AG04450 (cell line): ENCODE measurements at regions of chr2 and their contacts with region 1.

Region 1: DNA sequence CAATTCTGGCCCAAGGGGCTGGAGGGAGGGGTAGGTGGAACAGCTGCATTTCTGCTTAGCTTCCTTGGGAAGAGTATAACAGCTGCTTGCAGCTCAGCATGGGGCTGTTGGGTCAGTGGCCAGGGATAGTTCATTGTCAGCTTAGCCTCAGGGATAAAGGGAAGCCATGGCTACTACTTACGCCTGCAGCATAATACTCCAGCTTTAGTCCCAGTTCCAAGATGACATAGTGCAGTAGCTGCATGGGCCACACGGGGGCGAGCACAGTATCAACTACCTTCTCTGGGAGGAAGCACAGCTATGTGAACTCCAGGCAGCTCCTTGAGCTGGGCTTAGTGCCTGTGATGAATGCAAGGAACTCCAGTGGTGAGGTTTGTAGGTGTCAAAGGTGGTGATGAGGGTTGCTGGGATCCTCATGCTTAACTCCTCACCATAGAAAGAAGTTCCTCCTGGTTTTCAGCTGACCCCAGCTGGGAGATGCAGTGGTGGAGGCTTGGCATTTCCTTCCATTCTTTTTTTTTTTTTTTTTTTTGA is 35.4 kb upstream of the RHOB start:
- DNase-seq: peak; percentile 38
- H3K4me3 ChIP-seq: no peak overlapping the region
- H3K27ac ChIP-seq: no peak overlapping the region
- H3K27me3 ChIP-seq: no peaks in the 10 kb centered on the region
- CTCF ChIP-seq: peak; percentile 88

Region 2: GRCh38 chr2:20231632-20232031 is 179.8 kb before region 1 on chr2:
- CTCF ChIA-PET with region 1: no interaction called
- POLR2A ChIA-PET with region 1: no interaction called
- DNase-seq: no peak
- H3K4me3 ChIP-seq: no peak overlapping the region
- H3K27ac ChIP-seq: no peak overlapping the region
- H3K27me3 ChIP-seq: peaks cover 3% of the 10 kb centered on the region
- CTCF ChIP-seq: no peak

Region 3: DNA sequence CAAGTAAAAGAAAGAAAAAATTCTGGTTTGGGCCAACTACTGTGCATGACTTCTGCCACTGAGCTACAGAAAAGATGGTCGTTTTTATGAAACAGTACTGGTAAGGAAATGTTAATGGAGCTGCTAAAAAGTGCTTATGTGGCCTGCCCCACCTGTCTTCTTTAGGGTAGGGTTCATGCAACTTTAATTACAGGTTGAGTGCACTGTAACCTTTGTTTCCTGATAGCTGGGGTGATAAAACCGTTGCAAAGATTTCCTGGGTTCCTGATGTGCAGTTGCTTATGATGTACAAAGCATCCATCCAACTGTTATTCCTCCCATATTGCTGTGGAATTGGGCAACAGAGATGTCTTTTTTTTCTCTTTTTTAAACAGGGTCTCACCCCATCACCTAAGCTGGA is 26.5 kb before region 1 on chr2:
- CTCF ChIA-PET with region 1: interaction called, 17 read pairs
- POLR2A ChIA-PET with region 1: no interaction called
- DNase-seq: no peak
- H3K4me3 ChIP-seq: no peak overlapping the region
- H3K27ac ChIP-seq: no peak overlapping the region
- H3K27me3 ChIP-seq: peaks cover 10% of the 10 kb centered on the region
- CTCF ChIP-seq: no peak

Region 4: GRCh38 chr2:20424300-20425290 is 13.2 kb after region 1 on chr2:
- CTCF ChIA-PET with region 1: interaction called, 101 read pairs
- POLR2A ChIA-PET with region 1: interaction called, 19 read pairs
- DNase-seq: peak; percentile 81
- H3K4me3 ChIP-seq: no peak overlapping the region
- H3K27ac ChIP-seq: no peak overlapping the region
- H3K27me3 ChIP-seq: no peaks in the 10 kb centered on the region
- CTCF ChIP-seq: no peak

Region 5: GRCh38 chr2:20635675-20636584 is 224.5 kb after region 1 on chr2:
- CTCF ChIA-PET with region 1: interaction called, 83 read pairs
- POLR2A ChIA-PET with region 1: no interaction called
- DNase-seq: peak; percentile 53
- H3K4me3 ChIP-seq: no peak overlapping the region
- H3K27ac ChIP-seq: no peak overlapping the region
- H3K27me3 ChIP-seq: no peaks in the 10 kb centered on the region
- CTCF ChIP-seq: peak; percentile 96

Region 6: DNA sequence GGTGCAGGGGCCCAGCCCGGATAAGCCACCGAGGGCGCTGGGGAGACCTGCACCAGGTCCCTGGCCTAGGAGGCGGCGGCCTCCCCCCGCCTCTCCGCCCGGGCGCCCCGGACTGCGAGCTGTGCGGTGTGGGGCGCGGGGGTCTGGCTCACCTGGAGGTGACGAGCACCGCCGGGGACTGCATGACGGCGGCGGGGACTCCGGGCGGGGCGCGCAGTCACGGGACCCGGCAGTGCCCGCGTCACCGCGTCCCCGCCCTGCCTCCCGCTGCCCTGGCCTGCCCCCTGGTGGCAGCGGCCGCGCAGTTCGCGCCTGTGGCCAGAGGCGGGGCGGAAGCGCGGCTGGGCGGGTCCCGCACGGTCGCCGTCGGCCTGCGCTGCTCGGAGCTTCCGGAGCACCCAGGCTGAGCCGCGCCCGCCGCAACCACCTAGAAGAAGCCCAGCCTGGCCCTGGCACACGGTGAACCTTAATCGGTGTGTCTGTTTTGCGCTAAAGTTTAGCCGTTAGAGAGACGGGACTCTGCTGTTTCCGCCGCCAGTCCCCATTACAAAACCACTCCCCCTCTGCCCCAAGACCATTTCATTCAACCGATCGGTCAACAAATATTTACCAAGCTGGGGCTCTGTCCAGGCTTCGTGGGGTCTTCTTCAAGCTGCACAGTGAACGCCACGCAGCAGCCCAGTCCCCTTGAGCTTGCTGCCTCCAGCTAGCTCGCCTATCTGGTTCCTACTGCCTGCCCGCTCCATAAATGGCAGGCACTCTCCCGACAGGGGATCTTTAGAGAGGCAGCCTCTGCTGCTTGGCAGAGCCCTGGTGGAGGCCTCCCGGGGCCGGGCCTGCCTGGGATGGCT is 239.7 kb after region 1 on chr2 and contains the start of gene HS1BP3:
- CTCF ChIA-PET with region 1: interaction called, 40 read pairs
- POLR2A ChIA-PET with region 1: no interaction called
- DNase-seq: no peak
- H3K4me3 ChIP-seq: peak within 1 kb of the TSS; percentile 92
- H3K27ac ChIP-seq: peak within 1 kb of the TSS; percentile 3
- H3K27me3 ChIP-seq: peaks cover 15% of the 10 kb centered on the region
- CTCF ChIP-seq: peak; percentile 54
- polyA plus RNA-seq, gene HS1BP3: 14.2 and 16.1 TPM in 2 replicates

Region 7: DNA sequence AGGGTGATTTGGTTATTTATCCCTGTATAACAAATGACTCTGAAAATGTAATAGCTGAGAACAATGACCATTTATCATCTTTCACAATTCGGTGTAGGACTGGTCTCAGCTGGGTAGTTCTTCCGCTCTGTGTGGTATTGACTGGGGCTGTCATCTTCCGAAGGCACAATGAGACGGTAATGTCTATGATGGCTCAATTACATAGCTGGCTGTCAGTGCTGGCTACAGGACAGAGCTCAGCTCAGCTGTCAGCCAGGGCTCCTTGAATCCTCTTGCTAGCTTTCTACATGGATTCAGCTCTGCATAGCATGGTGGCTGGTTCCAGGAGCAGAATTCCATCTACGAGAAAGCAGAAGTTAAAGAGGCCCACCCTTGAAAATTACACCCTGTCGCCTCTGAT is 1196.1 kb after region 1 on chr2:
- CTCF ChIA-PET with region 1: no interaction called
- POLR2A ChIA-PET with region 1: no interaction called
- DNase-seq: no peak
- H3K4me3 ChIP-seq: no peak overlapping the region
- H3K27ac ChIP-seq: no peak overlapping the region
- H3K27me3 ChIP-seq: peaks cover 2% of the 10 kb centered on the region
- CTCF ChIP-seq: no peak

Region 8: DNA sequence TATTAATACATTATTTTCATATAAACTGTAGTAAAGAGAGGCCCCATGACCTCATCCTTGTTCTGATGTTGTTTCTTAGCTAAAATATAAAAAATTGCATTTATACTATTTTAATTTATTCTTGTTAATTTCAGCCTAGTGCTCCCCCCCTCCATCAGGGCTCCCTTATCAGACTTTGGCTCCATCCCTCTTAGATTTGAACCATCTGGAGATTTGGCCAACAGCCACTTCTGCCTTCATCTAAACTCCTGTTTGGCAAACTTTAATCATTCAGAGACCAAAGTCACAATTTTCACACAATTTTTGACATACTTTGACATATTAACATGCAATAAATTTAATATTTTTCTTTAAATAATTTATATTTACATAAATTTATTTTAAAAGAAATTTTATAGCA is 1281.7 kb after region 1 on chr2:
- CTCF ChIA-PET with region 1: no interaction called
- POLR2A ChIA-PET with region 1: no interaction called
- DNase-seq: no peak
- H3K4me3 ChIP-seq: no peak overlapping the region
- H3K27ac ChIP-seq: no peak overlapping the region
- H3K27me3 ChIP-seq: no peaks in the 10 kb centered on the region
- CTCF ChIP-seq: no peak